Naive thymus-derived CD8-positive, alpha-beta T cell (primary cell): ENCODE measurements at regions of chr11 and their contacts with region 1.

Region 1: DNA sequence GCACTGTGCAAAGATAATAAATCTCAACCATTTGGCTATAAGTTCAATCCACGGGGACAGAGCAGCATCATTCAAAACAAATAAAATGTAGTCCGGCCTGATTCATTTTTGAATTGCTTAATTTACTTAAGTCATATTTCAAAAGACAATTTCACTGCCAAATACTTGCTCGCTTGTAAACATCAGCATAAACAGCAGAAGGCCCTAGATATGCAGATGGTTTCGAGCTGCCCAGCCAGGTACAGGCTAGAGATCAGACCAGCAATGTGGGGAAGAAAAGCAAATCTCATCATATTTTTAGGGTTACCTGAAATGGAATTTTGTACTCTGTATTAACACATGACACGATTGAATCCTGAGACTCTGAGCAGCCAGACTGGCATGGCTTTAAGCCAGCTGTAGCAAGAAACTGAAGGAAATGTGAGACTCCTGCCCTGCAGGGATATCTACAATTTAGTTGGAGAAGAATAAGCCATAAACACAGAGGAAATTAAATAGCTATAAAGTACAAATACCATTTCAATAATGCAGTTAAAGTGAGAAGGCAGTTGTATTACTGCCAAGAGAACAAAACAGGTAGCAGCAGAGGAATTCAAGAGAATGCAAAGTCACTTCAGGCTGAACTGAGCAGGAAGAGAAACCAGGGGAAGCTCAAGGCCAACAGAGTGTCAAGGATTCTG is 440.3 kb downstream of the ETS1 start:
- DNase-seq: no peak
- ATAC-seq: no peak
- H3K4me3 Mint-ChIP-seq: no peak overlapping the region
- H3K27ac Mint-ChIP-seq: peak overlapping the region in 1 of 10 donors; percentile 12
- H3K4me1 Mint-ChIP-seq: peaks cover 0 to 3% (median under 1%) of the 10 kb centered on the region in 4 donors
- H3K27me3 Mint-ChIP-seq: no peaks in the 10 kb centered on the region

Region 2: GRCh38 chr11:128157423-128158298 is 10.6 kb after region 1 on chr11:
- POLR2A ChIA-PET with region 1: interaction called, 10 read pairs
- DNase-seq: peak; percentile 22 to 90 (median 58)
- ATAC-seq: peak; percentile 96
- H3K4me3 Mint-ChIP-seq: peak overlapping the region; percentile 67 to 87 (median 80)
- H3K27ac Mint-ChIP-seq: peak overlapping the region in 8 of 10 donors; percentile 17 to 84 (median 54)
- H3K4me1 Mint-ChIP-seq: peaks cover 0 to 7% (median 3%) of the 10 kb centered on the region in 4 donors
- H3K27me3 Mint-ChIP-seq: peaks cover 0 to 2% (median 0%) of the 10 kb centered on the region in 5 donors